Right ventricle myocardium superior (tissue), 1 donor: ENCODE measurements at regions of chr5 and their contacts with region 1.

Region 1: DNA sequence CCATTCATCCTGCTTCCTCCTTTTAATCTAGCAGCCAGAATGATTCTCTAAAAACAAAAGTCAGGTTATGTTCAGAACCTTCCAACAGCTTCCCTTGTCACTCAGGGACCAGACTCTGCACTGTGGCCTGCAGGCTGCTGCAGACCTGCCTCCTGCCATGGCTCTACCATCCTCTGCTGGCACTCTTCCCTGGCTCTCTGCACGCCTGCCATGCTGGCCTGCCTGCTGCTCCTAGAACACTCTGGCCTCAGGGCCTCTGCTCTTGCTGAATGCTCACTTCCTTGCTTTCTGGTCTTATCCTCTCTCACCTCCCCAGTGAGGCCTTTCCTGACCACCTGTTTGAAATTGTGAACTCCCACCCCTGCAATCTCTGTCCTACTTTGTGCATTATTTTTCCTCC is 149.4 kb downstream of the CD180 start:
- DNase-seq: peak; percentile 79
- ATAC-seq: peak; percentile 92

Region 2: GRCh38 chr5:67010684-67011409 is 36.3 kb before region 1 on chr5:
- intact Hi-C with region 1: loop called (anchors 5 kb)
- DNase-seq: no peak
- ATAC-seq: no peak